Activated CD4-positive, alpha-beta T cell treated with anti-CD3 and anti-CD28 coated beads, Interleukin-2, amount 10 ng/mL, durations not matched to agents 7 days and 5 days (primary cell): ENCODE measurements at regions of chr5 and their contacts with region 1.

Region 1: GRCh38 chr5:142375944-142376411 is 51.2 kb upstream of the SPRY4 start:
- DNase-seq: no peak
- H3K4me3 Mint-ChIP-seq: no peak overlapping the region
- H3K27ac Mint-ChIP-seq: no peak overlapping the region
- H3K4me1 Mint-ChIP-seq: peaks cover 6% of the 10 kb centered on the region
- H3K27me3 Mint-ChIP-seq: no peaks in the 10 kb centered on the region

Region 2: DNA sequence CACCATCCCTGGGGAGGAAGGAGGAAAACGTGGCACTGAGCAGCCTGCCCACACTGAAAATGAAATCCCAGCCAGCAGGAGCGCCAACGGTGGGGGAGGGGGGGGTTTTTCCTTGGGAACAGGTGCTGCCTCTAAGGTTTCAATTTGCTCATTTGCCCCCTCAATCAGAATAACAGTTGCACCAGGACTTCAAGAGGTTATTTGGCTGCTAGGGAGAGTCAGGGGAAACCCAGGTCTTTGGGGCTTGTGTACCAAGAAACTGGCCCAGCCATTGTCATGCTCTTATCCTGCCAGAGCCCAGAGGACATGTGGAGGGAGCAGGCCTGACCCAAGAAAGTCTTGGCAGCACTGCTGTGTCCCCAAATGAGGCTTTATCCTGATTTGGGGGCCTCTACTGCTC is 200.9 kb before region 1 on chr5:
- CTCF ChIA-PET with region 1: no interaction called
- POLR2A ChIA-PET with region 1: interaction called, 12 read pairs
- DNase-seq: no peak
- H3K4me3 Mint-ChIP-seq: no peak overlapping the region
- H3K27ac Mint-ChIP-seq: no peak overlapping the region
- H3K4me1 Mint-ChIP-seq: no peaks in the 10 kb centered on the region
- H3K27me3 Mint-ChIP-seq: no peaks in the 10 kb centered on the region

Region 3: GRCh38 chr5:142342128-142342981 is 33.6 kb before region 1 on chr5:
- CTCF ChIA-PET with region 1: no interaction called
- POLR2A ChIA-PET with region 1: interaction called, 11 read pairs
- DNase-seq: no peak
- H3K4me3 Mint-ChIP-seq: no peak overlapping the region
- H3K27ac Mint-ChIP-seq: no peak overlapping the region
- H3K4me1 Mint-ChIP-seq: peaks cover 1% of the 10 kb centered on the region
- H3K27me3 Mint-ChIP-seq: peaks cover 12% of the 10 kb centered on the region

Region 4: DNA sequence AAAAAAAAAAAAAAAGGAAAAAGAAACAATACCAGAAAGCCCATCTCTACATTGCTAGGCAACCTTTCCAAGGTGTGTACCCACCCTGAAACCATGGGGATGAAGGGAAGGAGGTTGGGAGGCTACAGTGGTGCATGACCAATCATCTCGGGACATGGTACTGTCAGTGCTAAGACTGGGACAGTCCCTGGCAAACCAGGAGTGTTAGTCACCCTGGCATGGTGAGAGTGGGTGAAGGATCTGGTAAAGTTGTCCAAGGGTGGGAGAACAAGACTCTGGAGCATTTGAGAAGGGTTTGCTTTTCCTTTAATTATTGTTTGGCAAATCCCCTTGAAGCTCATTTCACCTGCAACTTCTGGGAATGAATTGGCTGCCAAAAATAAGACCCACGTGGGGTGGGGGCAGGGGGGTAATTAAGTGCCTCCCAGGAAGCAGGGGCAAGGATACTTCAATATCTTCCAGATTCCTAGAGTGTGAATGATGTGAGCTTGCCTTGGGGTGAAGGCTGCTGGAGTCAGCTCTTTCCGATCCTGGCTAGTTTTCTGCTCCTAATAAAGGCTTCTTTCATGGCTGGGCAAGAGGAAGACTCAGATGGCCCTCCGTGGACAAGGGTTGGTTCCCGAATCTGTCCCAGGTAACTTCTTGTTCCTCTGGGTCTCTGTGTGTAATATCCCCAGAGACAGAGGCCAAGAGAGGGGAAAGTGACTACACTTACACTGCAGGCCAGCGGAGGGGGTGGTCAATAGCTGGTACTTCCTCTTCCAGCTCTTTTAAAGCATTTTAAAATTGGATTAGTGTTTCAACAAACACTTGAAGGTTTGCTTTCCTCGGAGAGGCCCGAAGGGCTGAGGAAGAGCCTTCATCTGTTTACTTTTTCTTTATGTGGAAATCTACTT is 10.4 kb after region 1 on chr5:
- CTCF ChIA-PET with region 1: no interaction called
- POLR2A ChIA-PET with region 1: no interaction called
- DNase-seq: no peak
- H3K4me3 Mint-ChIP-seq: no peak overlapping the region
- H3K27ac Mint-ChIP-seq: no peak overlapping the region
- H3K4me1 Mint-ChIP-seq: peaks cover 12% of the 10 kb centered on the region
- H3K27me3 Mint-ChIP-seq: peaks cover 2% of the 10 kb centered on the region